Naive thymus-derived CD4-positive, alpha-beta T cell (primary cell): ENCODE measurements at regions of chr2 and their contacts with region 1.

Region 1: GRCh38 chr2:241877989-241878970 is 8.8 kb downstream of the RTP5 start:
- DNase-seq: peak; percentile 53 to 85 (median 73)
- ATAC-seq: no peak
- H3K4me3 ChIP-seq: no peak overlapping the region
- H3K4me3 Mint-ChIP-seq: no peak overlapping the region
- H3K27ac ChIP-seq: no peak overlapping the region
- H3K27ac Mint-ChIP-seq: peak overlapping the region in 1 of 9 donors; percentile 62
- H3K4me1 ChIP-seq: peaks cover 15 to 17% of the 10 kb centered on the region in 2 donors
- H3K4me1 Mint-ChIP-seq: peaks cover 17 to 32% (median 21%) of the 10 kb centered on the region in 7 donors
- H3K27me3 ChIP-seq: no peaks in the 10 kb centered on the region
- H3K27me3 Mint-ChIP-seq: peaks cover 0 to 5% (median 0%) of the 10 kb centered on the region in 5 donors

Region 2: GRCh38 chr2:240851078-240851991 is 1026.9 kb before region 1 on chr2:
- CTCF ChIA-PET with region 1: interaction called, 7 read pairs
- POLR2A ChIA-PET with region 1: no interaction called
- intact Hi-C with region 1: loop called in 1 of 2 experiments (anchors 2 kb)
- DNase-seq: peak; percentile 57 to 83 (median 71)
- ATAC-seq: peak; percentile 92
- H3K4me3 ChIP-seq: no peak overlapping the region
- H3K4me3 Mint-ChIP-seq: no peak overlapping the region
- H3K27ac ChIP-seq: no peak overlapping the region
- H3K27ac Mint-ChIP-seq: peak overlapping the region in 1 of 9 donors; percentile 1
- H3K4me1 ChIP-seq: no peaks in the 10 kb centered on the region
- H3K4me1 Mint-ChIP-seq: peaks cover 0 to 4% (median 0%) of the 10 kb centered on the region in 7 donors
- H3K27me3 ChIP-seq: no peaks in the 10 kb centered on the region
- H3K27me3 Mint-ChIP-seq: peaks cover 0 to 5% (median 0%) of the 10 kb centered on the region in 5 donors

Region 3: DNA sequence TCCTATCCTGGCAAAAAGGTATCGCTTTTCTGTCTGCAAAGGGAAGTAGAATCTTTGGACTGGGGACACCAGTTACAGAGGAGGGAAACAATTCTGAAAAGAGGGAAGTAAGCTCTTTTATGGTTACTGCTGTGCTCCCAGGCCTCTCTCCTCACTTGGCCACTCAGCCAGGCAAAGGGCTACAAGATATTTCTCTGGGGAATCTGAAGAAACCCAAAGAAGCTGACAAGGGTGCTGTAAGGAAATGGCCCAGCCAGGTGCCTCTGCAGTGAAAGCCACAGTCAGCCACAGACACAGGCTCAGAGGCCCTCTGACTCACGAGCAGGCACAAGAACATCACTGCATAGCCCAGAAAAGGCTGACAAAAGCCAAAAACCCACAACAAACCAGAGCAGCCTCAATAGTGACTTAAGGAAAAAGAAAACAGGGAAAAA is 568.6 kb before region 1 on chr2:
- CTCF ChIA-PET with region 1: no interaction called
- POLR2A ChIA-PET with region 1: no interaction called
- intact Hi-C with region 1: no loop called
- DNase-seq: peak; percentile 19 to 65 (median 44)
- ATAC-seq: peak; percentile 89
- H3K4me3 ChIP-seq: no peak overlapping the region
- H3K4me3 Mint-ChIP-seq: peak overlapping the region in 9 of 10 donors; percentile 40 to 84 (median 68)
- H3K27ac ChIP-seq: peak overlapping the region; percentile 67
- H3K27ac Mint-ChIP-seq: peak overlapping the region; percentile 78 to 97 (median 90)
- H3K4me1 ChIP-seq: peaks cover 29% of the 10 kb centered on the region in 2 donors
- H3K4me1 Mint-ChIP-seq: peaks cover 54 to 88% (median 71%) of the 10 kb centered on the region in 7 donors
- H3K27me3 ChIP-seq: no peaks in the 10 kb centered on the region
- H3K27me3 Mint-ChIP-seq: no peaks in the 10 kb centered on the region

Region 4: DNA sequence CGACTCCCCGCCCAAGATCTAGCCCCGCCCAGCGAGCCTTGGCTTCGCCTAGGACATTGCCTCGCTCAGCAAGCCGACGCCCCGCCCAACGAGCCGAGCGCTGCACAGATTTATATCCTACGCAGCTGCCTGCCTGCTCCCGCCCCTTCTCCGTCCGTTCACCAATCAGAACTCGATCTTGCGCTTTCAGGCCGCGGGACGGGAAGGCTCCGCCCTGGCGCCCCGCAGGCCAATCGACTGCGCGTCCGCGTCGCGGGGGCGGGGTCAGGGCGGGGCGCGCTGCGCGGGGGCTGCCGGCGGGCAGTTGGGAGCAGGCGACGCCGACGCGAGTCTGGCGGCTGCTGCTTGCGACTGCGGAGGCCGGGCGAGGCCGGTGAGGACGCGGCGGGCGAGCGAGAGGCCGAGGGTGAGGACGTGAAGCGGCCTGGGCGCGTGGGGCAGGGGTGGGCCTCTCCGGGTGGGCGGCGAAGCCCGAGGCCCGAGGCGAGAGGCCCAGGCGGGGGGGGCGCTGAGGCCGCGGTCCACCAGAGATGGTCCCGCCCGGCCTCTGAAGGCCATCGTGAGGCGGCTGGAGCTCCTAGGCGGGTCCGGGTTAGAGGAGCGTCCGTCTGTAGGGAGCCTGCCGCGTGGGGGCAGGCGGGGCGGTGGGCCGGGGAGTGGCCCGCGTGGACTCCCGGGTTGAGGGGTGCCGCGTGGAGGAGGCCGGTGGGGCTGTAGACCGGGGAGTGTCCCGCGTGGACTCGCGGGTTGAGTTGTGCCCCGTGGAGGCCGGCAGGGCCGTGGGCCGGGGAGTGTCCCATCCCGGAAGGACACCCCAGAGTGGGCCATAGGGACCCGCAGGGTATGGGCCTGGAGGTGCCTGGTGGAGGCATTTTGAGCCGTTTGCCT is 522.1 kb before region 1 on chr2 and contains the start of gene FARP2:
- CTCF ChIA-PET with region 1: no interaction called
- POLR2A ChIA-PET with region 1: no interaction called
- intact Hi-C with region 1: loop called (anchors 1 kb)
- DNase-seq: peak; percentile 91 to 99 (median 97)
- ATAC-seq: peak; percentile 93
- H3K4me3 ChIP-seq: peak within 1 kb of the TSS; percentile 54
- H3K4me3 Mint-ChIP-seq: peak within 1 kb of the TSS; percentile 75 to 92 (median 85)
- H3K27ac ChIP-seq: peak within 1 kb of the TSS; percentile 72
- H3K27ac Mint-ChIP-seq: peak within 1 kb of the TSS in 8 of 9 donors; percentile 80 to 95 (median 90)
- H3K4me1 ChIP-seq: peaks cover 6 to 7% of the 10 kb centered on the region in 2 donors
- H3K4me1 Mint-ChIP-seq: peaks cover 5 to 34% (median 19%) of the 10 kb centered on the region in 7 donors
- H3K27me3 ChIP-seq: no peaks in the 10 kb centered on the region
- H3K27me3 Mint-ChIP-seq: no peaks in the 10 kb centered on the region
- total RNA-seq, gene FARP2: 12.4 to 31.0 (median 22.1) TPM

Region 5: GRCh38 chr2:241617431-241618154 is 260.7 kb before region 1 on chr2:
- CTCF ChIA-PET with region 1: no interaction called
- POLR2A ChIA-PET with region 1: no interaction called
- intact Hi-C with region 1: loop called in 1 of 2 experiments (anchors 5 kb)
- DNase-seq: peak in 8 of 9 donors; percentile 41 to 71 (median 60)
- ATAC-seq: peak; percentile 77
- H3K4me3 ChIP-seq: peak overlapping the region; percentile 68
- H3K4me3 Mint-ChIP-seq: peak overlapping the region; percentile 79 to 96 (median 91)
- H3K27ac ChIP-seq: peak overlapping the region; percentile 75
- H3K27ac Mint-ChIP-seq: peak overlapping the region; percentile 85 to 98 (median 94)
- H3K4me1 ChIP-seq: peaks cover 13 to 18% of the 10 kb centered on the region in 2 donors
- H3K4me1 Mint-ChIP-seq: peaks cover 23 to 49% (median 43%) of the 10 kb centered on the region in 7 donors
- H3K27me3 ChIP-seq: no peaks in the 10 kb centered on the region
- H3K27me3 Mint-ChIP-seq: no peaks in the 10 kb centered on the region

Region 6: DNA sequence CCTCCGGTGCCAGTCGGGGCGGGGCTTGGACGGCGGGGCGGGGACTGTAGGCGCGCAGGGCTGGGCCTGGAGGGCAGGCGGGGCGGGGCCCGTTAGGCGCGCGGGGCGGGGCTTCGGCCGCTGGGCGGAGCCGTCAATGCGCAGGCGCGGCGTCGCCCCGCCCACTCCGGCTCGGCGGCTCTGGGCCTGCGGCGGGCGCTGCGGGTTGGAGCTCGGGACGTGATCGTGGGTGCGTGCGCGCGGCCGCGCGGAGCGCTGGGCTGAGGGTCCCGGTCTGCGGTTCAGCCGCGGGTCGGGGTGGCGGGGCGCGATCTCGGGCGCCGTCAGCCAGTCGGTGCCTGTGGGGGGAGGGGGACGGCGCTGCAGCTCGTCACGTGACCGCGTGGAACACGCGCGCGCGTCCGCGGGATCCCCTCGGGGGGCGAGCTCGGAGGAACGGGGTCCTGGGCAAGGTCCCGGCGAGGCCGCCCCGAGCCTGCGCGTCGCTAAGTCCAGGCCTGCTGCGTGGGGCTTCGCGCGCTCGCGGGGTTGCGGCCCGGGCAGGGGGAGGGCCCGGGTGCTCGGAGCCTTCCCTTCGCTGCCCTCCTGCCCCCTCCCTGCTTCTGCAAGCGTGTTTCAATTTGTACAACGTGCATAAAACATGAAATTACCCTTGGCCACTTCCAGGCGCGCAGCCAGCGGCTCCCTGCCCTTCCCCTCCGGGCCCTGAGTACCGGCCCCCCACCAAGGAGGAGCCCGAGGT is 143.6 kb before region 1 on chr2 and contains the start of gene D2HGDH:
- CTCF ChIA-PET with region 1: interaction called, 3 read pairs
- POLR2A ChIA-PET with region 1: interaction called, 4 read pairs
- intact Hi-C with region 1: loop called (anchors 1 kb)
- DNase-seq: peak; percentile 85 to 99 (median 91)
- ATAC-seq: peak; percentile 98
- H3K4me3 ChIP-seq: peak within 1 kb of the TSS; percentile 88
- H3K4me3 Mint-ChIP-seq: peak within 1 kb of the TSS; percentile 79 to 89 (median 84)
- H3K27ac ChIP-seq: peak within 1 kb of the TSS; percentile 75
- H3K27ac Mint-ChIP-seq: peak within 1 kb of the TSS in 8 of 9 donors; percentile 40 to 79 (median 72)
- H3K4me1 ChIP-seq: peaks cover 9% of the 10 kb centered on the region in 2 donors
- H3K4me1 Mint-ChIP-seq: peaks cover 9 to 54% (median 43%) of the 10 kb centered on the region in 7 donors
- H3K27me3 ChIP-seq: no peaks in the 10 kb centered on the region
- H3K27me3 Mint-ChIP-seq: no peaks in the 10 kb centered on the region
- total RNA-seq, gene D2HGDH: 32.5 to 49.8 (median 41.1) TPM

Region 7: GRCh38 chr2:242031481-242032019 is 153.3 kb after region 1 on chr2:
- CTCF ChIA-PET with region 1: no interaction called
- POLR2A ChIA-PET with region 1: no interaction called
- intact Hi-C with region 1: loop called in 1 of 2 experiments (anchors 5 kb)
- DNase-seq: peak in 8 of 9 donors; percentile 60 to 86 (median 81)
- ATAC-seq: peak; percentile 93
- H3K4me3 ChIP-seq: peak overlapping the region; percentile 85
- H3K4me3 Mint-ChIP-seq: peak overlapping the region; percentile 88 to 96 (median 92)
- H3K27ac ChIP-seq: peak overlapping the region; percentile 67
- H3K27ac Mint-ChIP-seq: peak overlapping the region; percentile 80 to 98 (median 93)
- H3K4me1 ChIP-seq: peaks cover 21 to 24% of the 10 kb centered on the region in 2 donors
- H3K4me1 Mint-ChIP-seq: peaks cover 18 to 70% (median 65%) of the 10 kb centered on the region in 7 donors
- H3K27me3 ChIP-seq: peaks cover 0 to 4% of the 10 kb centered on the region in 2 donors
- H3K27me3 Mint-ChIP-seq: peaks cover 0 to 47% (median 0%) of the 10 kb centered on the region in 5 donors